ENCODE measurements at regions of chr4 and their contacts with region 1.

Region 1: DNA sequence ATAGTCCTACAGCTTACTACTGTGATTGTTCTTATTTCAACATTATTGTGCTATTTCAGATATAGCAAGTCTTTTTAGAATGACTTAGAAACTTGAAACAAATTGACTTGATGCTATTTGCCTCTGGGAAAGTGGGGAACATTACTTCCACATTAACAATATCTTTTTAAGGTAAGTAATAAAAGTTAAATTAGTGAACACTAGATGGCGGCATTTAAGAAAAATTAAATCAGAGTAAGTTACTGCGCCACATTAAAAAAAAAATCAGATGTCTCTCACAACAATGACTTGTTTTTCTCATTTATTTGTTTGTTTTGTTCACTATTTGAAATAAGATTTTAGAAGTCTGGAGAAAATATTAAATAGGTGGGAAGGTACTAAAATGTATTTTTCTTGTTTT is 1026.9 kb upstream of the SLIT2 start:
- DNase-seq: no peak

Region 2: DNA sequence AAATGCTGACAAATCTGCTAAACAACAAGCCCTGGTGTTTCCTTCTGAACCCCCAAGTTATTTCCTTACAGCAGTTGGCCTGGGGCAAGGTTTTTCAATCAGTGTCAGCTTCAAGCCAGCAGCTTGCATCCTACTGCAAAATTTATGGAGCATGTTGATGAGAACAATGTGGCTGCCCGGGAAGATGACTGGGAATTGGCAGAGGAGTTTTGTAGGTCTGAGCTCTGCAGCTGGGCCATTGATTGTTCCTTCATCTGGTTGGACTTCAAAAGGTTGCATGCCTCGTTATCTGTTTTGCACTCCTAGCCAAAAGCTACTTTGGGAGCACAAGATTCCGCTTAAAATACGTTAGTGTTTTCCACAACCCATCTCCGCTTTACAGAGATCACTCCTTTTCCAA is 173.0 kb before region 1 on chr4:
- intact Hi-C with region 1: no loop called
- DNase-seq: no peak

Region 3: GRCh38 chr4:19239565-19239964 is 14.7 kb after region 1 on chr4:
- intact Hi-C with region 1: no loop called
- DNase-seq: no peak

Region 4: DNA sequence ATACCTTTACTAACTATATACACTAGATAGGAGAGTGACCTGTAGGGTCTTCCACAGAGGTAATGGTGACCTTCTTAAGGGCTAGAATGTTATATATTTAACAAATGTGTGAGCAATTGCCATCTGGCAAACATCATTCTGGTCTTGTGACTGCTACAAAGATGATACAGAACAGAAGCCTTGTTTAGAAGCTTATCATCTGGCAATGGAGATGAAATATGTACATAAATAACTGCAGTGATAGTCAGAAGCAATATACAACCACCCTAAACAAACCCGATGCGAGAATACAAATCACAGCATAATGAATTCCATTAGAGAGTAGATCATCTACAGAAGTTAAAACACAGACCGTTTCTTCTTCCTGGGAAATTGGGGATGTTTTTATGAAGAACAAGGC is 74.2 kb after region 1 on chr4:
- intact Hi-C with region 1: no loop called
- DNase-seq: no peak

Region 5: GRCh38 chr4:20248155-20248558 is 1023.3 kb after region 1 on chr4:
- intact Hi-C with region 1: loop called (anchors 2 kb)
- DNase-seq: no peak